Activated T-helper 2 cell treated with anti-CD3 and anti-CD28 coated beads, Interferon-gamma antibody, Interleukin-2, Interleukin-4, amounts not matched to agents 10 μg/mL and 5 μg/mL and 100 μg/mL, durations not matched to agents 14 hours and 24 hours and 36 hours (primary cell): ENCODE measurements at regions of chr14 and their contacts with region 1.

Region 1: GRCh38 chr14:65373679-65374039 is 38.9 kb upstream of the FUT8 start:
- DNase-seq: no peak
- H3K4me3 Mint-ChIP-seq: no peak overlapping the region
- H3K27ac Mint-ChIP-seq: peak overlapping the region; percentile 50
- H3K4me1 Mint-ChIP-seq: peaks cover 42% of the 10 kb centered on the region
- H3K27me3 Mint-ChIP-seq: no peaks in the 10 kb centered on the region

Region 2: DNA sequence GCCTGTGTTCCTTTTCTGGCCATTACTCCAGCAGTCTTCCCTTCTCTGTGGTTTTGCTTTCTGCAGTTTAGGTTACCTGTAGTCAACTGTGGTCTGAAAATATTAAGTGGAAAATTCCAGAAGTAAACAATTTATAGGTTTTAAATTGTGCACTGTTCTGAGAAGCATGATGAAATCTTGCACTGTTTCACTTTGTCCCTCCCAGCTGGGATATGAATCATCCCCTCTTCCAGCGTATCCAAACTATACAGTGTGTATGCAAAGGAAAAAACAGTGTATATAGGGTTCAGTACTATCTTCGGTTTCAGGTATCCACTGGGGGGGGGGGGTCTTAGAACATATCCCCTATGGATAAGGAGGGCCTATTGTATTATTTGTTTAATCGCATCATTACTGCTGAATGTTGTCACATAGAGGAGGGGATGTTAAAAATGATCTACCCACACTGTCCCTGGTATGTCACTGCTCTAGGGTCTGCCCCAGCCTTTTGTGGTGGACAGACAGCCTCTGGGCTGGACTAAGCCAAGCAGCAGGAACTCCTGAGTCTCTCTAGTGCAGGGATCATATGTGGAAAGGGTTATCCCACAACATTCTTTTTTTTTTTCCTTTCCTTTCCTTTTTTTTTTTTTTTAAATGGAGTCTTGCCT is 162.2 kb before region 1 on chr14:
- intact Hi-C with region 1: no loop called
- DNase-seq: no peak
- H3K4me3 Mint-ChIP-seq: peak overlapping the region; percentile 67
- H3K27ac Mint-ChIP-seq: peak overlapping the region; percentile 95
- H3K4me1 Mint-ChIP-seq: peaks cover 55% of the 10 kb centered on the region
- H3K27me3 Mint-ChIP-seq: no peaks in the 10 kb centered on the region

Region 3: GRCh38 chr14:65361920-65362319 is 11.7 kb before region 1 on chr14:
- intact Hi-C with region 1: loop called (anchors 1 kb)
- DNase-seq: no peak
- H3K4me3 Mint-ChIP-seq: no peak overlapping the region
- H3K27ac Mint-ChIP-seq: no peak overlapping the region
- H3K4me1 Mint-ChIP-seq: peaks cover 34% of the 10 kb centered on the region
- H3K27me3 Mint-ChIP-seq: no peaks in the 10 kb centered on the region